Endothelial cell of umbilical vein (primary cell): ENCODE measurements at regions of chr17 and their contacts with region 1.

Region 1: DNA sequence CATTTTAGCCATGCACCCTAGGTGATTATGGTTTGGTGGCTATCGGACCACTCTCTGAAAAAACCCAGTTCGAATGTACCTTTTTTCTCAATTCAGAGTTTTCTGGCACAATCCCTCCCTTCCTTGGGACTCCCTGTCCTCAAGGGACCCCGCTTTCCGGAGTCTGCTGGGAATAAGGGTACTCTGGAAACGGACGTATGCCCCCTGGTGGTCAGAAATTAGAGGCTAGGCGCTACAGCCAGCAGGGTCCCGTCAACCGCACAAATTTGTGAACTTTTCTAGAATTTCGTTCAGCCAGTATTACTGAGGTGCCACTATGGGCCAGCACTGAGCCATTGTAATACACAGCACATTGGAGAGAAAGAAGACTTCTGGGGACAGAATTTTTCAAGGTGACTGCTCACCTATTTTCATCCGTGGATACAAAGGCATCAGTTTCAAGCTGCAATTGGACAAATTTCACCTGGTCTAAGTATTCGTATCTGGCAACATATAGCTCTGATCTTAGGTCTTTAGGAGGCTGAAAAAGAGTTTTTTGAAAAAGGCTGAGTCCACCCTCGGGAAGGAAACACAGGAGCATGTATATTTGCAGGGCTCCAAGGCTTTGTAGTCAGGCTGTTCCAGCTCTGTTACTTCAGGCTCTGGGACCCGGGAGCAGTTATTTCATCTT is 27.1 kb upstream of the CRYBA1 start:
- DNase-seq: peak; percentile 86
- H3K4me3 ChIP-seq: no peak overlapping the region
- H3K27ac ChIP-seq: no peak overlapping the region
- H3K4me1 ChIP-seq: no peaks in the 10 kb centered on the region
- H3K27me3 ChIP-seq: no peaks in the 10 kb centered on the region
- CTCF ChIP-seq: peak; percentile 86 to 94
- POLR2A ChIP-seq: no peak

Region 2: DNA sequence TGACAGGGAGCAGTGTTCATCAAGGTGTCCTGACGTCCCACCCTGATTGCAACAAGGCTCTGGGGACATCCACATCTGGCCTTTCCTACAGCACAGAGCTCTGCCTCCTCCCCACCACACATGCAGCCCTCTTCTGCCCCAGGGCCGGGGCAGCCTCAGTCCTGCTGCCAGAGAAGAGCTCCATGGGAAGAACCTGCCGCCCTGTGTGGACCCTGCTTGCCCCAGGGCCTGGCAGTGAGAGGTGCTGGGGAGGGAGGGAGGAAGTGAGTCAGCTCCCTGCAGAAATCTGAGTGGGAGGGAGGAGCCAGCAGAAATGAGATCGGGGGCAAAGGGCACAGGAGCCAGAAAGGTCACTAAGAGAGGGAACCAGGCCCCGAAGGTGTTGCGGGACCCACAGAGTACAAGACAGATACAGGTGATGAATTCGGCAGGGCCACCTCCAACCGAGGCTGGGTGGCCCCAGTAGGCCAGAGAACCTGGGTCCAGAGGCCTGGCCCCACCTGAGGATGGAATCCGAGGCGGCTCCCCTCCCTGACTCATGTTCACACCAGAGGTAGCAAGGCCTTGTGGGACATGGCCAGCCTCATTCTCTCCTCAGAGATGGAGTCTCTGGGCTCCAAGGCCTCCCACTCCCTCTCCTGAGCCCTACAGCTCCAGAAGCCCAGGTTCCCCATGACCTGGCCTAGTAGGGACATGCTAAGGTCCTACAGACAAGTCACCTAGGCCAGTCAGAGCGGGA is 64.1 kb before region 1 on chr17:
- CTCF ChIA-PET with region 1: interaction called, 320 read pairs
- POLR2A ChIA-PET with region 1: no interaction called
- dilution Hi-C with region 1: no loop called
- intact Hi-C with region 1: no loop called
- DNase-seq: peak; percentile 66
- H3K4me3 ChIP-seq: no peak overlapping the region
- H3K27ac ChIP-seq: peak overlapping the region; percentile 53
- H3K4me1 ChIP-seq: peaks cover 31% of the 10 kb centered on the region
- H3K27me3 ChIP-seq: no peaks in the 10 kb centered on the region
- CTCF ChIP-seq: no peak
- POLR2A ChIP-seq: no peak

Region 3: GRCh38 chr17:29165800-29166513 is 53.6 kb before region 1 on chr17:
- CTCF ChIA-PET with region 1: no interaction called
- POLR2A ChIA-PET with region 1: no interaction called
- dilution Hi-C with region 1: no loop called
- intact Hi-C with region 1: no loop called
- DNase-seq: no peak
- H3K4me3 ChIP-seq: no peak overlapping the region
- H3K27ac ChIP-seq: no peak overlapping the region
- H3K4me1 ChIP-seq: no peaks in the 10 kb centered on the region
- H3K27me3 ChIP-seq: no peaks in the 10 kb centered on the region
- CTCF ChIP-seq: no peak
- POLR2A ChIP-seq: no peak

Region 4: DNA sequence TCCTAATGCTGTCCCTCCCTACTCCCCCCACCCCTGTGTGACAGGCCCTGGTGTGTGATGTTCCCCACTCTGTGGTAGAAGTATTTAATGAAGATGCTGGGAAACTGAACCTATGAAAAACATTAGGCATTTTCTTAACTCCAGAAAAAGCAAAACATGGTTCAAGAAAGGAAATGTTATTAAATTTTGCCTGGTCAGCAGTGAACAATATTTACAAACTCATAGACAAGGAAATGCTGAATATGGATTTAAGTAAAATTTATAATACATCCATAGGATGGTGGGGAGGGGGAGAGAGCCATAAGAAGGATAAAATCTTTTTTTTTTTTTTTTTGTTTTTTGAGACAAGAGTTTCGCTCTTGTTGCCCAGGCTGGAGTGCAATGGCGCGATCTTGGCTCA is 16.4 kb after region 1 on chr17:
- CTCF ChIA-PET with region 1: interaction called, 33 read pairs
- POLR2A ChIA-PET with region 1: interaction called, 7 read pairs
- dilution Hi-C with region 1: no loop called
- intact Hi-C with region 1: no loop called
- DNase-seq: no peak
- H3K4me3 ChIP-seq: no peak overlapping the region
- H3K27ac ChIP-seq: no peak overlapping the region
- H3K4me1 ChIP-seq: peaks cover 8% of the 10 kb centered on the region
- H3K27me3 ChIP-seq: no peaks in the 10 kb centered on the region
- CTCF ChIP-seq: no peak
- POLR2A ChIP-seq: no peak

Region 5: GRCh38 chr17:29252101-29252866 is 32.8 kb after region 1 on chr17:
- CTCF ChIA-PET with region 1: interaction called, 41 read pairs
- POLR2A ChIA-PET with region 1: no interaction called
- dilution Hi-C with region 1: no loop called
- intact Hi-C with region 1: no loop called
- DNase-seq: peak; percentile 51
- H3K4me3 ChIP-seq: no peak overlapping the region
- H3K27ac ChIP-seq: no peak overlapping the region
- H3K4me1 ChIP-seq: peaks cover 24% of the 10 kb centered on the region
- H3K27me3 ChIP-seq: no peaks in the 10 kb centered on the region
- CTCF ChIP-seq: peak; percentile 37 to 42
- POLR2A ChIP-seq: no peak

Region 6: GRCh38 chr17:29273924-29274323 is 54.4 kb after region 1 on chr17:
- CTCF ChIA-PET with region 1: no interaction called
- POLR2A ChIA-PET with region 1: no interaction called
- dilution Hi-C with region 1: no loop called
- intact Hi-C with region 1: no loop called
- DNase-seq: no peak
- H3K4me3 ChIP-seq: no peak overlapping the region
- H3K27ac ChIP-seq: no peak overlapping the region
- H3K4me1 ChIP-seq: no peaks in the 10 kb centered on the region
- H3K27me3 ChIP-seq: no peaks in the 10 kb centered on the region
- CTCF ChIP-seq: no peak
- POLR2A ChIP-seq: no peak

Region 7: GRCh38 chr17:29303386-29303785 is 83.9 kb after region 1 on chr17:
- CTCF ChIA-PET with region 1: no interaction called
- POLR2A ChIA-PET with region 1: no interaction called
- dilution Hi-C with region 1: no loop called
- intact Hi-C with region 1: no loop called
- DNase-seq: no peak
- H3K4me3 ChIP-seq: no peak overlapping the region
- H3K27ac ChIP-seq: no peak overlapping the region
- H3K4me1 ChIP-seq: no peaks in the 10 kb centered on the region
- H3K27me3 ChIP-seq: no peaks in the 10 kb centered on the region
- CTCF ChIP-seq: no peak
- POLR2A ChIP-seq: no peak

Region 8: DNA sequence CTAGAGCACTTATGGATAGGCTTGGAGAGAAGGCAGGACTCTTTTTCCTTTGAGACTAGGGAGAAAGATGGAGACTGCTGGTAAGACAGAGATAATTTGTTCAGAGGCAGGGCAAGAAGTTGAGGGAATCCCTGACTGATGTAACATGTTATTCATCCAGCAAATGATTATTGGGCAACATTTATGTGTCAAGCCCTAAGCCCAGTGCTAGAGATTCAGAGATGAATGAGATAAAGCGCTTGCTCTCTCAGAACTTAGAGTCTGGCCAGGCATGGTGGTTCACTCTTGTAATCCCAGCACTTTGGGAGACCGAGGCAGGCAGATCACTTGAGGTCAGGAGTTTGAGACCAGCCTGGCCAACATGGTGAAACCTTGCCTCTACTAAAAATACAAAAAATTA is 122.2 kb after region 1 on chr17:
- CTCF ChIA-PET with region 1: no interaction called
- POLR2A ChIA-PET with region 1: no interaction called
- dilution Hi-C with region 1: no loop called
- intact Hi-C with region 1: no loop called
- DNase-seq: no peak
- H3K4me3 ChIP-seq: no peak overlapping the region
- H3K27ac ChIP-seq: no peak overlapping the region
- H3K4me1 ChIP-seq: no peaks in the 10 kb centered on the region
- H3K27me3 ChIP-seq: peaks cover 11 to 14% of the 10 kb centered on the region in 2 experiments
- CTCF ChIP-seq: no peak
- POLR2A ChIP-seq: no peak